Activated T-helper 1 cell treated with anti-CD3 and anti-CD28 coated beads, Interleukin-12 subunit alpha, Interleukin-12 subunit beta, Interleukin-2, Interleukin-4 antibody, amounts not matched to agents 30 ng/mL and 10 ng/mL and 1 ng/mL, durations not matched to agents 14 hours and 24 hours and 36 hours (primary cell): ENCODE measurements at regions of chr3 and their contacts with region 1.

Region 1: GRCh38 chr3:105752744-105753415 is 115.9 kb downstream of the CBLB start:
- DNase-seq: peak; percentile 24
- H3K4me3 Mint-ChIP-seq: peak overlapping the region; percentile 57
- H3K27ac Mint-ChIP-seq: peak overlapping the region; percentile 98
- H3K4me1 Mint-ChIP-seq: peaks cover 88% of the 10 kb centered on the region
- H3K27me3 Mint-ChIP-seq: no peaks in the 10 kb centered on the region

Region 2: DNA sequence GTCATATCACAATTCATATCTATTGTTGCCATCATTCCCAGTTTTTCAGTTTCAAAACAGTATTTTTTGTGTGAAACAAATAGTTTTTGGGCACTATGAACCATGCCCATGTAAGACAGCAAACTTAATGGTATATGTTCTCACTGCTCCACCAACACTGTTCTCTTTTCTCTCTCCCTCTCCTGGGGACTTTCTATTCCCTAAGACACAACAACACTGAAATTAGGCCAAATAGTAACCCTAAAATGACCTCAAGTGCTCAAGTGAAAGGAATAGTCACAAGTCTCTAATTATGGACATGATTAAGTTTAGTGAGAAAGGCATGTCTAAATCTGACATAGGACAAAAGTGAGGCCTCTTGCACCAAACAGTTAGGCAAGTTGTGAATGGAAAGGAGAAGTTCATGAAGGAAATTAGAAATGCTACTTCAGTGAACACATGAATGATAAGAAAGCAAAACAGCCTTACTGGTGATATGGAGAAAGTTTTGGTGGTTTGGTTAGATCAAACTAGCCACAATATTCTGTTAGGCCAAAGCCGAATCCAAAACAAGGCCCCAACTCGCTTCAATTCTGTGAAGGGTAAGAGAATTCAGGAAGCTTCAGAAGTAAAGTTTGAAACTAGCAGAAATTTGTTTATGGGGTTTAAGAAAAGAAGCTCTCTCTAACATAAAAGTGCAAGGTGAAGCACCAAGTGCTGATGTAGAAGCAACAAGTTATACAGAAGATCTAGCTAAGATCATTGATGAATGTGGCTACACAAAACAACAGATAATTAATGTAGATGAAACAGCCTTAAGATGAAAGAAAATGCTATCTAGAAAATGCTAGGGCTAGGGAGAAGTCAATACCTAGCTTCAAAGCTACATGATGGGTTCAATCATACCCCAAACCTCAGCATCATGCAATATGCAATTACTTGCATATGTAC is 11.8 kb after region 1 on chr3:
- intact Hi-C with region 1: loop called (anchors 1 kb)
- DNase-seq: no peak
- H3K4me3 Mint-ChIP-seq: peak overlapping the region; percentile 38
- H3K27ac Mint-ChIP-seq: peak overlapping the region; percentile 83
- H3K4me1 Mint-ChIP-seq: peaks cover 80% of the 10 kb centered on the region
- H3K27me3 Mint-ChIP-seq: no peaks in the 10 kb centered on the region

Region 3: DNA sequence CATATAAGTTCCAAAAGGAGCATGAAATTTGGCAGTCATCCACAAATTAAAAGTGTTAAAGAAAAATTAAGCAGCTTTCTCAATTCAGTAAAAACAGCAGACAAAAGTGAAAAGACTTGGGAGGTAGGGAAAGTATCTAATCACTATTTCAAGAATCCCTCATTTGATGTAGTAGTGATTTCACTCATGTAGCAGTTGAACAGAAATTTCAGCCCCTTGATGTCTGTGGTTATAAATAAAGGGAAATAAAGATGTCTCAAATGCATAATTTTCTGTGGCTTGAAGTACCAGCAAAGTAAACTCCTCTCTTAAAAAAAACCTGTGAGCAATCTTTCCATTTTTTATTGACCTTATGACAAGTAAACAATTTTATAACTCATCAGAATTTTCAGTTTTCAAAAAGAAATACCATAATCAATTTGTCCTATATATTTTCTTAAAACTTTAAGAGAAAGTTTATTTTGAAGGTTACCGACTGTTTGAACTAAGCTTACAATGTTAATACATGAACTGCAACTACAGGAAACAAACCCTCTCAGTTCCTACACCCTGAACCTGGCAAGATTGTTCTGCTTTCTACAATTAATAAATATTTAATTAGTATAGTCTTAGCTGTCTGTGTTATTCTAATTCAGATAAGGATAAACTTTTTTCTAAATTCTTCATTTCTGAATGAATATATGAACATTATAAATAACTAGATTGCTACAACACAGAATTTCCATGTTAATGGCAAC is 21.7 kb after region 1 on chr3:
- intact Hi-C with region 1: loop called (anchors 1 kb)
- DNase-seq: no peak
- H3K4me3 Mint-ChIP-seq: no peak overlapping the region
- H3K27ac Mint-ChIP-seq: peak overlapping the region; percentile 76
- H3K4me1 Mint-ChIP-seq: peaks cover 71% of the 10 kb centered on the region
- H3K27me3 Mint-ChIP-seq: no peaks in the 10 kb centered on the region

Region 4: DNA sequence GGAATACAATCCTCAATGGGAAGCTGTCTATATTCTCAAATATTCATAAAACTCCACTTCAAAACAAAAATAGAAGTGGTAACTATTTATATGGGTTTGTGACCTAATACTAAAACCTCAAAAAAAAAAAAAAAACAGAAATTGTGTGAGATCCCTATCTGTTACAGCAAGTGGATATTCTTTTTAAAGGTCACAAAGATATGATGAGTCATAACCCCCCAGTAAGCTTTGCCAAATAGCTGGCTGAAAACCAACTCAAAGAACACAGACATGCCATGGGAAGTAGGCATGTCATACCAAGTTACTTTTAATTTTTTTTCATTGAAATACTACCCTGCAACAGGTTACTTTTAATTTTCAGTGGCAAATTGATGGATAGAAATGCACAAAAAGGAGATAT is 53.5 kb after region 1 on chr3:
- intact Hi-C with region 1: loop called (anchors 1 kb)
- DNase-seq: no peak
- H3K4me3 Mint-ChIP-seq: peak overlapping the region; percentile 40
- H3K27ac Mint-ChIP-seq: peak overlapping the region; percentile 84
- H3K4me1 Mint-ChIP-seq: peaks cover 67% of the 10 kb centered on the region
- H3K27me3 Mint-ChIP-seq: no peaks in the 10 kb centered on the region

Region 5: GRCh38 chr3:106215047-106215446 is 462.2 kb after region 1 on chr3:
- intact Hi-C with region 1: loop called (anchors 10 kb)
- DNase-seq: peak; percentile 5
- H3K4me3 Mint-ChIP-seq: peak overlapping the region; percentile 43
- H3K27ac Mint-ChIP-seq: peak overlapping the region; percentile 82
- H3K4me1 Mint-ChIP-seq: peaks cover 56% of the 10 kb centered on the region
- H3K27me3 Mint-ChIP-seq: no peaks in the 10 kb centered on the region